ENCODE measurements at regions of chr16 and their contacts with region 1.

Region 1: DNA sequence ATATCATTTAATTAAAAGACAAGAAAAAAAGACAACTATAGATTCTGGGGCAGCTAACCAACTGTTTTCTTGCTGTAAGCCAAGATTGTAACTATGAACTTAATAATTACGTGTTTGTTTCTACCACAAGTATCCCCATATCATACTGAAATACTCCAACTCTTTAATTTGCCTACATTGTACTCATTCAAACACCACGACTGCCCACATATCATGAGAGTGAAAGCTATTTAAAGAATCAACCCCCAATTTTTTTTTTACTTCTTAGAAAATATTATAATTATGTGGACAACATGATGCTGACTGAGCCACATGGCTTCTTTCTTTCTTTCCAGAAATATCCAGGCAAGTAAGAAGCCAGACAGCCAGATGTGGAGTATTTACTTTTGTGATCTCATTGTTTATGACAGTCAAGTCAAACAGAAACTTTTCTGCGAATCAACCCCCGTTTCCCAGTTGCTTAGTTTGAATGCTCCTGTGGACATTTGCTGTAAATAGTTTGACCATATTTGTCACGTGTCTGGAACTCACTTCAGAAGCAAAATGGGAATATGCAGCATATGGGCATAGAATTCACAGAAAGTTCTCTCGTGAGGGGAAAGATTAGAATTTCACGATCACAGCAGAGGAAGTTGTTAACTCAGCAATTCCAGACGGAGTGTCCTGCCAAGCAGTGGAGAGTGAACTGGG is 126.8 kb upstream of the PSMD7 start:
- DNase-seq: no peak
- H3K4me3 ChIP-seq: peak overlapping the region in 2 of 3 experiments; percentile 21 to 34
- H3K27ac ChIP-seq: no peak overlapping the region
- H3K4me1 ChIP-seq: no peaks in the 10 kb centered on the region
- H3K27me3 ChIP-seq: no peaks in the 10 kb centered on the region
- CTCF ChIP-seq: no peak

Region 2: DNA sequence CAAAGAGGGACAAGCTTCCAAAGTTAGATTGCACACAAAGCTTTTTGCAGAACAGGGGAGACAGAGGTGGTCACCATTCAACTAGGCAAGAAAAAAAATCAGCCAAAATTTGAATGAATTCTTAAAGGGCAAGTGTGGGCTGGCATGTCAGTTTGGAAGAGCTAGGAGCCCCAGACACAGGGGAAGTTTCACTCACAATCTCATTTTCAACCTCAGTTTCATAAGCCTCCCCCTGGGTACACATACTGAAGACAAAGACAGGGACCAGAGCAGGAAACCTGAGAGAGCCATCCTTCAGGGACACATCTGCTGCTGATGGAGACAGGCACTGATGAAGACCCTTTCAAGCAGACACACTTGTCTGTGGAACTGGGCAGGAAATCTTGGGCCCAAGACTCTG is 20.5 kb after region 1 on chr16:
- CTCF ChIA-PET with region 1: no interaction called
- dilution Hi-C with region 1: no loop called
- in situ Hi-C with region 1: no loop called
- intact Hi-C with region 1: no loop called
- DNase-seq: no peak
- H3K4me3 ChIP-seq: no peak overlapping the region
- H3K27ac ChIP-seq: no peak overlapping the region
- H3K4me1 ChIP-seq: no peaks in the 10 kb centered on the region
- H3K27me3 ChIP-seq: no peaks in the 10 kb centered on the region
- CTCF ChIP-seq: no peak

Region 3: GRCh38 chr16:74213372-74213771 is 43.5 kb after region 1 on chr16:
- CTCF ChIA-PET with region 1: no interaction called
- dilution Hi-C with region 1: loop called (anchors 5 kb)
- in situ Hi-C with region 1: no loop called
- intact Hi-C with region 1: no loop called
- DNase-seq: no peak
- H3K4me3 ChIP-seq: no peak overlapping the region
- H3K27ac ChIP-seq: no peak overlapping the region
- H3K4me1 ChIP-seq: no peaks in the 10 kb centered on the region
- H3K27me3 ChIP-seq: no peaks in the 10 kb centered on the region
- CTCF ChIP-seq: no peak

Measured in mammary epithelial cell (primary cell).